Left cardiac atrium (tissue), 4 donors: ENCODE measurements at regions of chr1 and their contacts with region 1.

Region 1: DNA sequence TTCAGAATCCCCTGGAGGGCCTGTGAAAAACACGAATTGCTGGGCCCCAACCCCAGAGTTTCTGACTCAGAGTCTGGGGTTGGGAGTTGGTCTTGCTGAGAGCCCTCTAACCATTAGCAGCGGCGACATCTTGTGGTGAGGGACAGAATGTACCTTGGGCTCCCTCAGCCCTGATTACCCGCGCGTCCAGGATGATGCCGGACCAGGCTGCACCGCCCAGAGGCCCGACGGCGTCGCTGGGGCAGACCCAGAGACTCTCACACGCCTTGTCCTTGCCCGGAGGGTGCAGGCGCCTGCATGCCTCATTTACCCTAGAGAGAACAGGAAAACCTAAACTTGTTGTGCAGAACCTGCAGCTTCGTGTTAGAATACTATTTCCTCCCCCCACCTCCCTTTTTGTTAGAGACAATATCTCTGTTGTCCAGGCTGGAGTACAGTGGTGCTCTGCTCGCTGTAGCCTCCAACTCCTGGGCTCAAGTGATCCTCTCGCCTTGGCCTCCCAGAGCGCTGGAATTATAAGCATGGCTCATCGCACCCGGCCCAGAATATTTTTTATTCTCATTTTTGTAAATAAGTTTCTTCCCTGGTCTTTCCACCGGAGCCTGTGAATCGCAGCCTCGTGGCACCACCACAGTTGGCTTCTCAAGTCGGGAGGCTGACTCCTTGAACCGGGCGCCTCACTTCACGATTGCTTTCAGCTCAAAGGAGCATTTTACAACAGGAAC is 22.2 kb upstream of the RD3 start:
- DNase-seq: peak; percentile 81
- ATAC-seq: peak; percentile 84 to 88

Region 2: DNA sequence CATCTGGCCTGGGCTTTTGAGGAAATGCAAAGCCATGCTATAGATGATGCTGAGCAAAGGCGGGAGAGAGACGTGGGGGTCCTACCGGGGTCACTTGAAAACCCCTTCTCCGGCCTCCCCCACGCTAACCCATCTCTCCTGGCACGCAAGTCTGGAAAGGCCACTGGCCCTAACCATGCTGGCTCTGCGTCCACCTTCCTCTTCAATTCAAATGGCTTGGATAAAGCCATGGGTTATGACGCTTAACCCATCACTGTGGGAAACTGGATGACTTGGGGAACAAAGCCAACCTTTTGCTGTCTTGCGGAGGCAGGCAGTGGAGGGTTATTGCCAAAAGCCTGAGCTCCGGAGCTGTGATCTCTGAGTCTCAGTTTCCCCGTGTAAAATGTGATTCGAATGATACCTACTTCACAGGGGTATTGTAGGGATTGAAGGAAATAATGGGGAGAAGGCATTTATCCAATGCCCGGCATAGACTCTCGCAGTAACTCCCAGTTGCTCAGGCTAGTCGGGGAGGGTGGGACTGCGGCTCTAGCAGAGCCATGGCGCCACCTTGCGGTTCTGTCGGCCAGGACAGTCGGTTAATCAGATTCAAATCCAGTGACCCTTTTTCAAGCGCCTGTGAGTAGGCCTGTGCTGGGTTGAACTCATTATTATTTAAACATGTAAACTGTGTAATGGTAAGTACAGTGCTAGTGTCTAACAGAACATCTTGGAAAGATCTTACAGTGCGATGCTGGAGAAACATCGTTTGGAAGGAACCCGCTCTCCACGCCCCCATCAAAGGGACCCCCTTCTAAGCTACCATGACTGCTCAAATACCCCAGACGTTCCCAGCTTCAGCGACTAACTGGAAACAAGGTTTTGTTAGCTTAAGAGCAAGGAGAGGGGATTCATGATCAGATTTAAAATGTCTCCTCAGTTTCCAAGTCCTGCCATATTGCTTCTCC is 140.9 kb after region 1 on chr1:
- intact Hi-C with region 1: loop called (anchors 2 to 10 kb)
- DNase-seq: peak; percentile 89
- ATAC-seq: peak; percentile 95 to 96

Region 3: DNA sequence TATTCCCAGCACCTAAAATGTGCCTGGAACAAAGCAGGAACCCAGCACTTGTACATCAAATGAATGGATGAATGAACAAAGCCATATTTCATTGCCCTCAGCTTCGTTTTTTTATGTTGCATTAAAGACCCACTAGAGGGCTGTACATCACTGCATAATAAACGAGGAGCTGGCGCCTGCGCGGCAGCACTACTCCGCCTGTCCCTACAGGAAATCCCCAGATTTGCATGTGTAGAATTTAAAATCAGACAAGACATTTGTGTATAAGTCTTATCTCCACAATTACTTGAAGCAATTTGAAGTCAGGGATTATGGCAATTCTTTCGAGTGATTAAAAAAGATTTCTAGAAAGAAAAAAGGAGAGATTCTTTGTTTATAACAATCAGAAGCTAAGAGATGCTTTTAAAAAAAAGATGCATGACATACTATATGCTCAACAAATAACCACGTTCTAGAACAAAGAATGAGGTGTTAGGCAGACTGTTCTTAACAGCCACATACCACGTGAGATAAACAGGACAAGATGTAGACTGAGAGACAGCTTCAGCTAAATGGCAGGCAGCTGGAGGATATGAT is 166.6 kb after region 1 on chr1:
- intact Hi-C with region 1: no loop called
- DNase-seq: peak; percentile 66
- ATAC-seq: peak; percentile 91 to 93